Left ventricle myocardium superior (tissue), 1 donor: ENCODE measurements at regions of chr9 and their contacts with region 1.

Region 1: DNA sequence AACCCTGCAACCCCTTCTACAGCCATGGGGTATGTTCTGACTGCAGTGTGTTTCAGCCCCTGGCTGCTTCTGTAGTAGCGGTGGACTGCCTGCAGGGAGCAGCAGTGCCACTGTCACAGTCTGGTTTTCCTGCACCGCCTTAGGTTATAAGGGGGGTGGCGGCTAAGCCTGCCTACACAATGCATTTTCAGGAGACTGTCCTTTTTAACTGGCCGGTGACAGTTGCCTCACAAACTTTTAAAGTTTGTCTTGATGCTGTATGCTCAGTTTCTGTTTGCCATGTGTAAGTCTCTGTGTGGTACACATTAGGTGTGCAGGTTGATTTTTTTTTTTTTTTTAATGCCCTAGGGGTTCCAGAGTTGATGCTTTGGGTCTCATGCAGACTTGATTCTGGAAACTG is 53.0 kb downstream of the NUP214 start:
- DNase-seq: peak; percentile 82
- ATAC-seq: peak; percentile 93

Region 2: GRCh38 chr9:131266266-131267229 is 88.2 kb after region 1 on chr9:
- intact Hi-C with region 1: loop called (anchors 10 kb)
- DNase-seq: peak; percentile 72
- ATAC-seq: peak; percentile 47

Region 3: GRCh38 chr9:131334629-131335367 is 156.4 kb after region 1 on chr9:
- intact Hi-C with region 1: loop called (anchors 2 kb)
- DNase-seq: peak; percentile 90
- ATAC-seq: peak; percentile 87

Region 4: GRCh38 chr9:131524578-131525315 is 346.4 kb after region 1 on chr9:
- intact Hi-C with region 1: no loop called
- DNase-seq: no peak
- ATAC-seq: no peak